Aorta (tissue), 5 donors: ENCODE measurements at regions of chr4 and their contacts with region 1.

Region 1: DNA sequence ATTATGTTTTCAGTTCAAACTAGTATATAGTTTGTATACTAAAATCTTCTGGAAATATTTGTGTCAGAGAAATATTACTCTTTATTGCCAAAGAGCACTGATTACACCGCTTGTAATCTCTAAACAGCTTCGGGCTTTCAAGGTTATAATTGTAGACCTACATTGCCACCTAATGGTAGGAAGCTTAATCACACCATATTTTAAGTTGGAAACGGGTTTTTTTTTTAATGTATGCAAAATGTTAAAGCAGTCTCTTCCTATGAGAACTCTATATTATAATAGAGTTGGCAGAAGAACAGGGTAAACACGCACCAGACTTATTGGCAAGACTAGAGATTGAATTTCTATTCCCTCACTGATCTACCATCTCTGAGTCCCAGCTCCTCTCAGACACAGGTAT is 19.5 kb upstream of the NFXL1 start:
- DNase-seq: no peak
- ATAC-seq: peak; percentile 73
- H3K4me3 ChIP-seq: no peak overlapping the region
- H3K27ac ChIP-seq: no peak overlapping the region
- H3K4me1 ChIP-seq: no peaks in the 10 kb centered on the region
- H3K27me3 ChIP-seq: no peaks in the 10 kb centered on the region

Region 2: GRCh38 chr4:47669946-47670345 is 263.9 kb before region 1 on chr4:
- intact Hi-C with region 1: loop called (anchors 5 to 10 kb)
- DNase-seq: no peak
- ATAC-seq: no peak
- H3K4me3 ChIP-seq: no peak overlapping the region
- H3K27ac ChIP-seq: no peak overlapping the region
- H3K4me1 ChIP-seq: no peaks in the 10 kb centered on the region
- H3K27me3 ChIP-seq: no peaks in the 10 kb centered on the region

Region 3: DNA sequence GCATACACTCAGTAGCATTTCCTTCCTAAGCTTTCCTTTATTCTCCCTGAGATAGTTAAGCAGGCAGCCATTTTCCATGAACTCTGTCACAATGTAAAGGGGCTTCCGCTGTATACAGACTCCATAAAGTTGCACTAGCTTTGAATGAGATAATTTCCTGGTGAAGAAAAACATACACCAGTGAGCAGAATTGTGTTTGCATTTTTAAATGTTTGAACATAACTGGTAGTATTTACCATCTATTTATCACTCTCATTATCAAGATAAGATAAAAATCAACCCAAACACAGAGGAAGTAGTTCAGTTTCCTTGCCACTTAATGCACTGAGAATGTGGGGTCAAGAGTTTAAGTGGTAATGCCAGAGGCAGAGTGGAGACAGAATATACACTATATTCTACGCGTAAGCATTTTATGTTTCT is 146.1 kb after region 1 on chr4:
- intact Hi-C with region 1: loop called (anchors 5 to 10 kb)
- DNase-seq: no peak
- ATAC-seq: no peak
- H3K4me3 ChIP-seq: no peak overlapping the region
- H3K27ac ChIP-seq: no peak overlapping the region
- H3K4me1 ChIP-seq: no peaks in the 10 kb centered on the region
- H3K27me3 ChIP-seq: no peaks in the 10 kb centered on the region